Activated CD4-positive, alpha-beta memory T cell treated with anti-CD3 and anti-CD28 coated beads, Interleukin-2, amount 10 ng/mL, durations not matched to agents 7 days and 5 days (primary cell): ENCODE measurements at regions of chr15 and their contacts with region 1.

Region 1: GRCh38 chr15:39756806-39757522 is 25.7 kb downstream of the FSIP1 start:
- DNase-seq: no peak
- H3K4me3 Mint-ChIP-seq: no peak overlapping the region
- H3K27ac Mint-ChIP-seq: no peak overlapping the region
- H3K4me1 Mint-ChIP-seq: no peaks in the 10 kb centered on the region
- H3K27me3 Mint-ChIP-seq: peaks cover 30% of the 10 kb centered on the region

Region 2: GRCh38 chr15:39438799-39439592 is 318.0 kb before region 1 on chr15:
- CTCF ChIA-PET with region 1: no interaction called
- POLR2A ChIA-PET with region 1: no interaction called
- DNase-seq: no peak
- H3K4me3 Mint-ChIP-seq: no peak overlapping the region
- H3K27ac Mint-ChIP-seq: no peak overlapping the region
- H3K4me1 Mint-ChIP-seq: no peaks in the 10 kb centered on the region
- H3K27me3 Mint-ChIP-seq: peaks cover 51% of the 10 kb centered on the region

Region 3: DNA sequence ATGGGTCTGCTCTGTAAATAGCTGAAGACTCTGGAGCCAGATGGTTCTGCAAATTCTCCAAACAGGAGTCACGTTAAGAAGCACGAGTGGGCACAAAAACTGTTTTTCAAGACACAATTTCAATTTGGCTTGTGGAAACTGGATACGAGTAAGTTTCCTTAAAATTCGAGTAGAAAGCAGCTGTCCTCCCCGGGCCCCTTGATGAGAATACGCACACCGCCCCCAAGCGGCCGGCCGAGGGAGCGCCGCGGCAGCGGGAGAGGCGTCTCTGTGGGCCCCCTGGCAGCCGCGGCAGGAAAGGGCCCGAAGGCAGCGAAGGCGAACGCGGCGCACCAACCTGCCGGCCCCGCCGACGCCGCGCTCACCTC is 176.9 kb before region 1 on chr15:
- CTCF ChIA-PET with region 1: interaction called, 75 read pairs
- POLR2A ChIA-PET with region 1: interaction called, 3 read pairs
- DNase-seq: peak; percentile 91
- H3K4me3 Mint-ChIP-seq: peak overlapping the region; percentile 43
- H3K27ac Mint-ChIP-seq: no peak overlapping the region
- H3K4me1 Mint-ChIP-seq: peaks cover 15% of the 10 kb centered on the region
- H3K27me3 Mint-ChIP-seq: peaks cover 61% of the 10 kb centered on the region

Region 4: DNA sequence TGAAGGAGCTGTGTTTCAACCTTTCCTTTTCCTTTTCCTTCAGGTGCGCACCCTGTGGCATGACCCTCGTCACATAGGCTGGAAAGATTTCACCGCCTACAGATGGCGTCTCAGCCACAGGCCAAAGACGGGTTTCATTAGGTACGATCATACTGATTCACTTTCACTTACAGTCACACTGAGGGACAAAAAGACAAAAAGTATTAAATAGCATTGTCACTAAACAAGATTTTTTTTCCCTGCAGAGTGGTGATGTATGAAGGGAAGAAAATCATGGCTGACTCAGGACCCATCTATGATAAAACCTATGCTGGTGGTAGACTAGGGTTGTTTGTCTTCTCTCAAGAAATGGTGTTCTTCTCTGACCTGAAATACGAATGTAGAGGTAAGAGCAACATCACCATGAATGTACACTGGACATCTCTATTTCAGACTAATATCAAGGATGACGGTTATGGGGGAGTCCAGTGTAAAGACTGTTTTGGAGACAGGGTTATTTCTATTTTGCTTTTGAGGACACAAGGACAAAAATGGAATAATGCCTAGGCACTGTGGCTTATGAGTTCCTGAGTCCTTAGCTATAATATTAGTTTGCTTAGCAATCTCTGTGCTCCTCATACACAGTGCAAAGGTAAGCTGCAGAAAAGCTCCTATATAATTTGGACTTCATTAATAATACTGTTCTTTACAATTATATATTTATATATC is 162.8 kb before region 1 on chr15:
- CTCF ChIA-PET with region 1: interaction called, 17 read pairs
- POLR2A ChIA-PET with region 1: no interaction called
- DNase-seq: peak; percentile 51
- H3K4me3 Mint-ChIP-seq: no peak overlapping the region
- H3K27ac Mint-ChIP-seq: no peak overlapping the region
- H3K4me1 Mint-ChIP-seq: peaks cover 7% of the 10 kb centered on the region
- H3K27me3 Mint-ChIP-seq: peaks cover 7% of the 10 kb centered on the region

Region 5: DNA sequence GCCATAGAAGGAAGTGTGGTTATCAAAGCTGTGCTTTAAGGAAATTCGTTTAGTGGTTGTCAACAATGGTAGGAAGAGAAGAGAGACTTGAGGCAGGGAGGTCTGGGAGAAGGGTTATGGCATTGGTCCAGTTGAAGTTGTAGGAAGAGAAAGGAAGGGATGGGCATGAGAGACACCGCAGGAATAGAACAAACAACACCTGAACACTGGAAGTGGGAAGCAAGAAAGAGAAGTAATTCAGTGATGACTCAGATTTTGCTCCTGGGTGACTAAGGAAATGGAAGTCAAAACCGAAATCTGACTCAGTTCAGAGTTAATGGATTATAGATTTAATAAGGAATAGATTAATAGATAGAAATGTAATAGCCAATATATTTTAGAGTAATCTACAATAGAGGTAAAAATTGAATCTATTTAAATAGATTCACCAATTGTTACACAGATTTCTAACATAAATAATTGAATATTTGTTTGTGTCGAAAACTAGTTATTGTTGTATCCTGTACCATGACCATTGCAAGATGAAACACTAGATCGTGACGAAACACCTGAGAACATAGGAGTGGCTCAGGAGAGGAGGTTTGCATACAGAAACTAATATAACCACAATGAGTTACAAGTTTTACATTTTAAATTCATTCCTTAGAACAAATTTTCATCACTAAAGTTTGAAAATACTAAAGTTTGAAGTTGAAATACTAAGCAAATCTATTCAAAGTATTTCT is 140.1 kb before region 1 on chr15:
- CTCF ChIA-PET with region 1: no interaction called
- POLR2A ChIA-PET with region 1: no interaction called
- DNase-seq: no peak
- H3K4me3 Mint-ChIP-seq: no peak overlapping the region
- H3K27ac Mint-ChIP-seq: no peak overlapping the region
- H3K4me1 Mint-ChIP-seq: peaks cover 10% of the 10 kb centered on the region
- H3K27me3 Mint-ChIP-seq: peaks cover 3% of the 10 kb centered on the region

Region 6: DNA sequence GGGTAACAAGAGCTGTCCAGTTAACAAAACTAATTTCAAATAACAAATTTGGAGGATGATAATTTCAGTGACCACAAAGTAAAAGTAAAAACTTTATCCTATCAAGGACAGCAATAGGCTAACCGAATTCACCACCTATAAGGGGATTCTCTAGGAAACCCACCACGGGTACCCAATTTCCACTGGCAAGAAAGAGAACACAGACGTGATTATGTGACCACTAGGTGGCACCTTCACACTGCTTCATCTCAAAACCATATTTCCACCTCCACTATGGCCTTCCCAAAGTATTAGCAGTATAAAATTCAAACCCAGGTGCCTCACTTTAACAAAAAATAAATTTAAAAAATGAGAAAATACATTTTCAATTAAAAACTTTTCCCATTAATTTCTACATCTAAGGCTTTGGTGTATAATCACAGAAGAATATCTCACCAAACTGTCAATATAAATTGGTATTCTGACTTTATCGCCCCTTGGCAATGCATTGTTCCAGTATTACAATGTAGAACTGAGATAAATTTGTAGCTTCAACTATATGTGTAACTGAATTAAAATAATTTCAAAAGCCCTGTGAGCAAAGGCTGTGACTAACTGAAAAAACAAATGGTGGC is 70.9 kb before region 1 on chr15:
- CTCF ChIA-PET with region 1: interaction called, 65 read pairs
- POLR2A ChIA-PET with region 1: interaction called, 3 read pairs
- DNase-seq: peak; percentile 33
- H3K4me3 Mint-ChIP-seq: no peak overlapping the region
- H3K27ac Mint-ChIP-seq: no peak overlapping the region
- H3K4me1 Mint-ChIP-seq: peaks cover 4% of the 10 kb centered on the region
- H3K27me3 Mint-ChIP-seq: peaks cover 5% of the 10 kb centered on the region

Region 7: GRCh38 chr15:39741258-39741657 is 15.7 kb before region 1 on chr15:
- CTCF ChIA-PET with region 1: interaction called, 16 read pairs
- POLR2A ChIA-PET with region 1: no interaction called
- DNase-seq: no peak
- H3K4me3 Mint-ChIP-seq: no peak overlapping the region
- H3K27ac Mint-ChIP-seq: no peak overlapping the region
- H3K4me1 Mint-ChIP-seq: no peaks in the 10 kb centered on the region
- H3K27me3 Mint-ChIP-seq: peaks cover 11% of the 10 kb centered on the region

Region 8: DNA sequence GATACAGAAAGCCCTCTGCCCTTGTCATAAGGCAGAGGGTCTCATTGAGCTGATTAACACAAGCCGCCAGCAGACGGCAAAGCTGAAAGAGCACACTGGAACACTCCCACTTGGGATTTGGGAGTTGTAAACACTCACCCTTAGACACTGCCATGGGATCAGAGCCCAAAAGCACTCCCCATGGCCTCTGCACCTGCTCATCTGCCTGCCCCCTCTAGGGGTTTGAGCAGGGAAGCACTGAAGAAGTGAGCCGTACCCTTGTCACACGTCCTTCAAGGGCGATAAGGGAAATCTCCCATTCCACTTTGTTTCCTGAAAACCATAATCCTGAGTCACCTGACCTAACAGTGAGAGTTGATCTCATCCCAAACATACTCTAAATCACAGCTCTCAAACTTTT is 11.0 kb after region 1 on chr15:
- CTCF ChIA-PET with region 1: interaction called, 20 read pairs
- POLR2A ChIA-PET with region 1: no interaction called
- DNase-seq: no peak
- H3K4me3 Mint-ChIP-seq: no peak overlapping the region
- H3K27ac Mint-ChIP-seq: no peak overlapping the region
- H3K4me1 Mint-ChIP-seq: peaks cover 3% of the 10 kb centered on the region
- H3K27me3 Mint-ChIP-seq: peaks cover 2% of the 10 kb centered on the region

Region 9: DNA sequence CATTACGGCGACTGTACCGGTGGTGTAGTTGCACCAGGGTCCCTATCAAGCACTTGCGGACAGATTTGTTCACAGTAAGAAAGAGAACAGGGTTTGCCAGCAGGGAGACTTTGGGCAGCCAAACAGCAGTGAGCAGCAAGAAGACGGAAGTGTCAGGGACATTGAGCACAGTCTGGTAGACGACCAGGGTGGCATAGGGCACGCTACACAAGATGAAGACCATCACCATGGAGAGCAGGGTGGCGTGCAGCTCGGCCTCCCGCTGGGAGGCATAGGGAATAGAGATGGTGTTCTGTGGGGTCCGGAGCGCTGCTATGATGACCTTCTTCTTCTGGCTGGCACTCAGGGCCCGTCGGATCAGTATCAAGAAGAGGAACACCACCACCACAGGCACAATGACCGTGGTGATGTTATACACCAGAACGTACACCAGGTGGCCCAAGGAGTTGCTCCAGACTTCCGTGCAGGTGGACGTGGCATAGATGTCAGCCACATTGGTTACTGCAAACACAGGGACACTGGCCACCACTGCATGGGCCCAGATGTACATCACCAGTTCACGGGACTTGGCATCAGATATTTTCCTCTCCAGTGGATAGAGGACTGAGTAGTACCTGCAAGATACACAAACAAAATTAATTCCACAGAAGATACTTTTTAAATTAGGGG is 44.8 kb after region 1 on chr15:
- CTCF ChIA-PET with region 1: no interaction called
- POLR2A ChIA-PET with region 1: no interaction called
- DNase-seq: peak; percentile 23
- H3K4me3 Mint-ChIP-seq: no peak overlapping the region
- H3K27ac Mint-ChIP-seq: no peak overlapping the region
- H3K4me1 Mint-ChIP-seq: no peaks in the 10 kb centered on the region
- H3K27me3 Mint-ChIP-seq: peaks cover 19% of the 10 kb centered on the region

Region 10: GRCh38 chr15:39852250-39852649 is 95.3 kb after region 1 on chr15:
- CTCF ChIA-PET with region 1: no interaction called
- POLR2A ChIA-PET with region 1: no interaction called
- DNase-seq: no peak
- H3K4me3 Mint-ChIP-seq: no peak overlapping the region
- H3K27ac Mint-ChIP-seq: no peak overlapping the region
- H3K4me1 Mint-ChIP-seq: no peaks in the 10 kb centered on the region
- H3K27me3 Mint-ChIP-seq: peaks cover 32% of the 10 kb centered on the region